ENCODE measurements at regions of chr4 and their contacts with region 1.

Region 1: DNA sequence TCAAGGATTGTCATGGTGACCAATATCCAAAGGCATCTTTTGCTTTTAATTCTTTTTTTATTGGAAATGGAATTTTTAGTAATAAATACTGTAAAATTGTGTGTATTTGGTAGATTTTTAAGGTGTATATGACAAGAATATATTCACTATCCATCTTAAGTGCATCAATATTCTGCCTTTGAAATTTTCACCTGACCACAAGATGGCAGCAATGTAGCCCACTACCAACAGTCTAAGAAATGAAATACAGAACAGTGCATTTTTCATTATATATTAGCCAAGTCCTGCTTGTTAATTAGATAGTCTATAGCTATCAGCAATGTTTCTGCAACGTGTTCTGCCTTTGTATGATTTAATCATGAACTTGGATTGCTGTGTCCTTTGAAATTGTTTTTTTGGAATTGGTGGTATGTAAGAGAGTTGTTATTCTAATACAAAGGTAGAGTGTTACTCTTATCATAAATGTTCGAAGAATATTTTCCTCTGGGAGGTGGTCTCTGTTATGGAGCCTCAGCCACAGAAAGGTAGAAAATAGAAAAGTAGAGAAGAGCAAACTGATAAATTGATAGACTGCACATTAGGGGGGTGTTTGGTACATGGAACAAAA is 38.2 kb downstream of the HPGDS start:
- DNase-seq: no peak
- CTCF ChIP-seq: peak; percentile 59

Region 2: GRCh38 chr4:94390804-94391410 is 86.4 kb after region 1 on chr4:
- in situ Hi-C with region 1: loop called (anchors 10 kb)
- DNase-seq: peak; percentile 24
- CTCF ChIP-seq: peak; percentile 34

Region 3: DNA sequence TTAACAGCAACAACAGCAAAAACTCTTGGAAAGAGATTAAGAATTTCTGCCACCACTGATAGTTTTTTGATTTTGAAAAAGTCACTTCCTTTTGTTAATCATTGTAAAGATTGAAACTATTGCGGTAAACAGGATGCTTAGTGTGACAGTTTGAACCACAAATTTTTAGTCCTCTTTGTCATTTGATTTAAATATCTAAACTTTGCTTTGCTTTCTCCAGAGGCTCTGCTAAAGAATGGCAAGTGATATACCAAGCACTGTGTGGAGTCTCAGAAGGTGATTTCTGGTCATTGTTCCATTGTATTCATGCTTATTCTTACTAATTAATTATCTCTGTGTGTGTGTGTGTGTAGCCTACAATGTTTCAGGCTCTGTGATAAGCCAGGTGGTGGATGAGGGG is 608.8 kb after region 1 on chr4:
- in situ Hi-C with region 1: no loop called
- DNase-seq: no peak
- CTCF ChIP-seq: no peak